B cell (primary cell): ENCODE measurements at regions of chr15 and their contacts with region 1.

Region 1: DNA sequence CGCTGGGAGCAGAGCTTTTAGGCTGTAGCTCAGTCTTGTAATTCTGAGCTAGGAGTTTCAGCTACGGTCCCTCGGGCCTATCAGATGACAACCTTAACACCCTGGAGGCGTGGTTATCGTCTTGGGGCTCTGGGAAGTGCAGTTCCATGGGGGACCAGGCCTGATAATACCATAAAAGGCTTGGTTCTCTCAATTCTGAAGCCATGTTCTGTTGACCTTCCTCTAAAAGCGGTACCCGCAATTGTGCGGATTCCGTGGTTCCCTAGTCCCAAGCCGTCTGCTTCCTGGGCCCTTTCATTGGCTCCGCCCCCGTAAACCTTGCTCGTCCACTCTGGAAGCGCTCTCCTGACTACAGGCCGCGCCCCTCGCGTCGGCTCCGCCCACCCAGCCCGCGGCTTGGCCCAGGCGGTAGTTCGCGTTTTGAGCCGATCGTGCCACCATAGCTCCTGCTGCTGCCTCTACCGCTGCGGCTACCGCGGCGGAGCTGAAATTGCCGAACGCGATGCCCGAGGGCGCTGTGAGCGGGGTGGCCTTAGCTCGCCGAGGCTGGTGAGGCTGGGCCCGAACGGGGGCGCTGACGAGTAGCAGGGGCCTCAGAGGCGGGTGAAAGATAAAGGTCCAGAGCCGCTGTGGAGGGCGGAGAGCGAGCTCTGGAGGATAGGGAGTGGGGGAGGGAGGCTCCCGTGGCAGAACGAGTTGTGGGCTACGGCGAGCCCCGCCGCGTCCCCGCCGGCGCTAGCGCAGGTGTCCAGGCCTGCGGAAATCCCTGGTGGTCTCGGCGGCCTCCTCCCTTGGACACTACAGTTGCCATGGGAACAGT is at the start of gene MAPKBP1:
- DNase-seq: peak; percentile 99
- ATAC-seq: peak; percentile 91
- H3K4me3 ChIP-seq: peak within 1 kb of the TSS; percentile 75 to 87 (median 78)
- H3K4me3 Mint-ChIP-seq: peak within 1 kb of the TSS; percentile 99
- H3K27ac ChIP-seq: peak within 1 kb of the TSS; percentile 62 to 71
- H3K27ac Mint-ChIP-seq: peak within 1 kb of the TSS; percentile 96
- H3K4me1 ChIP-seq: peaks cover 30 to 32% of the 10 kb centered on the region in 2 donors
- H3K4me1 Mint-ChIP-seq: peaks cover 57% of the 10 kb centered on the region
- H3K27me3 ChIP-seq: no peaks in the 10 kb centered on the region
- H3K27me3 Mint-ChIP-seq: no peaks in the 10 kb centered on the region
- CTCF ChIP-seq: peak; percentile 83
- total RNA-seq, gene MAPKBP1: 59.2 and 65.5 TPM in 2 replicates

Region 2: DNA sequence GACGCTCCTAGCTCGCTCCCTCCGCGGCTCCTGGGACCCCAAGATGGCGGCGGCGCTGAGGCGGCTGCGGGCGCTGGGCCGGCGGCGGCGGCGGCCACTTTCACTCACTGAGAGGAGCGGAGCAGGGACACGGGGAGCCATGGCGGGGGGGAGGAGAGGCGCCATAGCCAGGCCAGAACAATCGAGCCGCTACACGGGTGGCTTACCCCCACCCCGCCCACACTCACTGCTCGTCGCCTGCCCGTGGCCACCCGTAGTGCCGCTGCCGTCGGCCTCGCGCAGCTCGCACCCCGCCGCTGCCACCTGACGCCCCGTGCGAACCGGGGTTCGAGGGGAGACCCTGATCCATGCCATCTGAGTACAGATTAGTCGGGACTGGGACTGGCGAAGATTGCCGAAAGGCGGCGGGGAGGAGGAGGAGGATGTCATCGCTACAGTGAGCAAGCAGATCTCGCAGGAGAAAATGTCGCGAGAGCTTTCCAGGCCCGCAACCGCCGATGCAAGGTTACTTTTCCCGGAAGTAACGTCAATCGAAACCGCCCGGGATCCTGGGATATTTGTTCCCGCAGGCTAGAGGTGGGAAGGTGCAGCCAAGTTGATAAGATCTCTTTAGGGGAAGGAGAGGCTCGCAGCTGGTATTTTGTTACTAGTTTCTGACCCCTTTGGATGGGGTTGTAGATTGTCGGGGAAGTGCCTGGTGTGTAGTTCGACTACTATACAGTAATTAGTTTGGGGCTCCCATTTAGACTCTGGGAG is 658.0 kb before region 1 on chr15 and contains the start of gene INO80:
- CTCF ChIA-PET with region 1: no interaction called
- POLR2A ChIA-PET with region 1: no interaction called
- intact Hi-C with region 1: loop called (anchors 5 kb)
- DNase-seq: peak; percentile 98
- ATAC-seq: peak; percentile 66
- H3K4me3 ChIP-seq: peak within 1 kb of the TSS; percentile 73 to 92 (median 80)
- H3K4me3 Mint-ChIP-seq: peak within 1 kb of the TSS; percentile 100
- H3K27ac ChIP-seq: peak within 1 kb of the TSS; percentile 93
- H3K27ac Mint-ChIP-seq: peak within 1 kb of the TSS; percentile 100
- H3K4me1 ChIP-seq: peaks cover 16 to 17% of the 10 kb centered on the region in 2 donors
- H3K4me1 Mint-ChIP-seq: peaks cover 26% of the 10 kb centered on the region
- H3K27me3 ChIP-seq: no peaks in the 10 kb centered on the region
- H3K27me3 Mint-ChIP-seq: no peaks in the 10 kb centered on the region
- CTCF ChIP-seq: no peak
- total RNA-seq, gene INO80: 55.7 and 57.8 TPM in 2 replicates

Region 3: DNA sequence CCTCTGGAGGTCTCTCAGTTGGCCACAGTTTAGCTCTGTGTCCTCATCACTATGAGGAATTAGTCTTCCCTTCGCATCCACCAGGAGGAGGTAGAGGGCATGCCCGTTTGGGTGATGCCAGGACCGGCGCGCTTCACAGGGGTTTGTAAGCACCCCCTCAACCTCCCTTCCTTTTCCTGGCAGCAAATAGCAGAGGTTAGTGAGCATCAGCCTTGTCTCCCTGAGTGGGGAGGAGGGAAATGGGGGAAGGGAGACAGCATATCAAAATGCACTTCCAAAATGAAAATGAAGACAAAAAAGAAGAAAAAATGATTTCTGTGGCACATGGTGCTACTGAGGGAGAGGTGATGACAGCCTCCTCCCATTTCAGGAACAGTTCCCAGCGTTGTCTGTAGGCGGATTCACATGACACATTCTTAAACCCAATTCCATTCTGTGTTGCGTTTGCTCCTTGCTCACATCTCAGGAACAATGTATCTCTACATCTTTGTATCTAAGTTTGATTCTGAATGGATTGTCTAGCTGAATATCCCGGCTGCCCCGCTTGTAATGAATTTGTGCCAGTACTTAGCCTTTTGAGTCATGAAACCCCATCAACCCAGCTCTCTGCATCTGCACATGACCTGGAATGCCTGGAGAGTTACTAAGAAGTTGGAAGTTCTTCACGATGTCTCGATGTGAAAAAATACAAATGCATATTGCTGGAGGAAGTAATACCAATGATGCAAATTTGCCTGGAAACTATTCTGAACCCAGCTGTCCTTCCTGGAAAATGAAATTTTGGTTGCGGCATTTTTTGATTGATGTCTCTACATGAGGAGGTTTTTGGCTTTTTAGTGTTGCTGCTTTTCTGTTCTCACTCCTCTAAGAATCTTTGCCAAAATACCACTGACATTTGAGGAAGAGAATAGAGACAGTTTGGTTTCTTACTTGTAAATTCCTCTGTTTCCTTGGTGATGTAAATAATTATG is 170.0 kb before region 1 on chr15:
- CTCF ChIA-PET with region 1: interaction called, 19 read pairs
- POLR2A ChIA-PET with region 1: interaction called, 6 read pairs
- intact Hi-C with region 1: no loop called
- DNase-seq: peak; percentile 74
- ATAC-seq: peak; percentile 85
- H3K4me3 ChIP-seq: peak overlapping the region in 3 of 5 experiments; percentile 2 to 31 (median 29)
- H3K4me3 Mint-ChIP-seq: peak overlapping the region; percentile 77
- H3K27ac ChIP-seq: no peak overlapping the region
- H3K27ac Mint-ChIP-seq: no peak overlapping the region
- H3K4me1 ChIP-seq: peaks cover 8 to 10% of the 10 kb centered on the region in 2 donors
- H3K4me1 Mint-ChIP-seq: peaks cover 9% of the 10 kb centered on the region
- H3K27me3 ChIP-seq: peaks cover 0 to 17% (median 5%) of the 10 kb centered on the region in 4 experiments
- H3K27me3 Mint-ChIP-seq: peaks cover 34% of the 10 kb centered on the region
- CTCF ChIP-seq: peak; percentile 80

Region 4: GRCh38 chr15:41713047-41713446 is 61.2 kb before region 1 on chr15:
- CTCF ChIA-PET with region 1: no interaction called
- POLR2A ChIA-PET with region 1: no interaction called
- intact Hi-C with region 1: no loop called
- DNase-seq: no peak
- ATAC-seq: no peak
- H3K4me3 ChIP-seq: no peak overlapping the region
- H3K4me3 Mint-ChIP-seq: no peak overlapping the region
- H3K27ac ChIP-seq: no peak overlapping the region
- H3K27ac Mint-ChIP-seq: no peak overlapping the region
- H3K4me1 ChIP-seq: no peaks in the 10 kb centered on the region
- H3K4me1 Mint-ChIP-seq: no peaks in the 10 kb centered on the region
- H3K27me3 ChIP-seq: no peaks in the 10 kb centered on the region
- H3K27me3 Mint-ChIP-seq: no peaks in the 10 kb centered on the region
- CTCF ChIP-seq: no peak

Region 5: DNA sequence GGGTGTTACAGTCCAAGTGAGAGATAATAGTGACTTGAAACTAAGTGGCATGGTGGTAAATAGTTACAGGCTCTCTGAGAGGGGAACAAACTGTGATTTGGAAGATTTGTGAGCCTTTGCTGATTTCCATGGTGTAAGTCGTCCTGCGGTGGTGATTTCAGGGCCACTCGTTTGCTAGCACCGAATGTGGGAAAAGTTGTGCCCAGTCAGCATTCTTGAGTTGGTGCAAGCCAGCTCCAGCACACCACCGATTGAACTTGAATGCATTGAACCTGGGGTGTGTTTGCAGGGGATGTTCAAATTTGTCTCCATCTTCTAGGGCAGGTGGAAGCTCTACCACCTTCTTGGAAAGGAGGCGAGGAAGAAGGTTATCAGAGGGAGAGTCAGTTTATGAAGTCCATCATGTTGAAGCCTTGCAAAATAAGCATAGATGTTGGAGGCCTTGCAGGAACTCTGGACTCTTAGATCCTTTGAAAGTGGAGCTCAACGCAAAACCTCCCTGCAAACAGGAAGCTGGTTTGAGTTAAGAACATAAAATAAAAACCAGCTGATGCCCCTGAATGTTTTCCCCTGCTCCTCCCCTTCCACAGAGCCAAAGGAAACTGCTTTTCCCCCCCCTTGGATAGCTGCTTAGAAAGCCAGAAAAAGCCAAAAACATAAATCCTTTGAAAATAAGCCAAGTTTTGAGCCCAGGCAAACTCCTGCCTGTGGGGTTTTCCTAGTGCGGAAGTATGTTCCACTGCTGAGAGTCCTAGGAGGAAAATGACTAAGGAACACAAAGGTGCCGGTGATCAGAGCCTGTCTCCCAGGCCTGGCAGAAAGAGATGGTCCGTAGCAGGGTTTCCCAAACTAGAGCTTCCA is 22.0 kb after region 1 on chr15:
- CTCF ChIA-PET with region 1: interaction called, 716 read pairs
- POLR2A ChIA-PET with region 1: no interaction called
- intact Hi-C with region 1: no loop called
- DNase-seq: no peak
- ATAC-seq: no peak
- H3K4me3 ChIP-seq: no peak overlapping the region
- H3K4me3 Mint-ChIP-seq: no peak overlapping the region
- H3K27ac ChIP-seq: no peak overlapping the region
- H3K27ac Mint-ChIP-seq: peak overlapping the region; percentile 16
- H3K4me1 ChIP-seq: peaks cover 6 to 18% of the 10 kb centered on the region in 2 donors
- H3K4me1 Mint-ChIP-seq: peaks cover 30% of the 10 kb centered on the region
- H3K27me3 ChIP-seq: no peaks in the 10 kb centered on the region
- H3K27me3 Mint-ChIP-seq: no peaks in the 10 kb centered on the region
- CTCF ChIP-seq: no peak

Region 6: GRCh38 chr15:41876689-41877088 is 102.4 kb after region 1 on chr15:
- CTCF ChIA-PET with region 1: interaction called, 10 read pairs
- POLR2A ChIA-PET with region 1: no interaction called
- intact Hi-C with region 1: no loop called
- DNase-seq: no peak
- ATAC-seq: no peak
- H3K4me3 ChIP-seq: no peak overlapping the region
- H3K4me3 Mint-ChIP-seq: no peak overlapping the region
- H3K27ac ChIP-seq: no peak overlapping the region
- H3K27ac Mint-ChIP-seq: no peak overlapping the region
- H3K4me1 ChIP-seq: peaks cover 3 to 11% of the 10 kb centered on the region in 2 donors
- H3K4me1 Mint-ChIP-seq: peaks cover 12% of the 10 kb centered on the region
- H3K27me3 ChIP-seq: peaks cover 0 to 26% (median 1%) of the 10 kb centered on the region in 4 experiments
- H3K27me3 Mint-ChIP-seq: peaks cover 26% of the 10 kb centered on the region
- CTCF ChIP-seq: no peak

Region 7: DNA sequence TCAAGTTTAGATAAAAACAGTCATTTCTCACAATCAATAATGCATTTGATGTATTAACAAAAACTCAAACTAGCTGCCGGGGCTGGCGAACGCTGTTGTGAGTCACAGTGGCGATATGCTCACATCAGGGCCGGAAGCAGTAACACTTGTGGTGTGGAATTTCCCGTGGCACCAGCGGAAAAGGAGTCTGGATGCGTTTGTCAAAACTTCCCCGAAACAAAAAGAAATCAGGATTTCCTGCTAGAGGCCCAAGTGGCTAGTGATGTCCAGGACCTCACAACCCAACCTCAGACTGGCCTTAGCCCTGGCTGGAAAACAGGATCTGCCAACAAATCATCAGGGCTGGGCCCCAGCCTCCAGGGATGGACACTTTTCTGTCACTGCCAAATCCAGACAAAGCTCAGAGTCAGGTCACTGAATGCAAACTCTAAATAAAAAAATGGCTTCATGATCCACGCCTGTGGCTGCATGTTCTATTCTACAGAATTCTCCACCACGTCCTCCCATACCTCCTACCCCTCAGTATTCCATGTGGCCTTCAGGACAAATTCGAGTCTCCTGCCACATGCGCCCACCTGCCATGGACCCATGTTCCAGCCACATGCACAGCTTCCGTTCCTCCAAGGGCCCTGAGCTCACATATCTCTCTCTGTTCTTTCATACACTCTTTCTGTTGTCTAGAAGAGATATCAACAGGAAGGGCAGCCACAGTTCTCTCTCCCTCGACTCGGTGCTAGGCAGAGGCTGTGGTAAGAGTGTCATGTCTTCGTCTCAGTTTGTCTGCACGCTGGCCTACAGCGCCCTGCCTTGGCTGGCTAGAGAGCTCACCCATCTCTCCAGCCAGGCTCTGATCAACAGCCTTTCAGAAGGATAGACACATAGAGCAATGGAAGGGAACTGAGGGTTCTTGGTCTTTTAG is 162.6 kb after region 1 on chr15:
- CTCF ChIA-PET with region 1: interaction called, 19 read pairs
- POLR2A ChIA-PET with region 1: no interaction called
- intact Hi-C with region 1: no loop called
- DNase-seq: peak; percentile 41
- ATAC-seq: peak; percentile 70
- H3K4me3 ChIP-seq: no peak overlapping the region
- H3K4me3 Mint-ChIP-seq: no peak overlapping the region
- H3K27ac ChIP-seq: peak overlapping the region; percentile 20 to 78
- H3K27ac Mint-ChIP-seq: peak overlapping the region; percentile 82
- H3K4me1 ChIP-seq: peaks cover 17 to 35% of the 10 kb centered on the region in 2 donors
- H3K4me1 Mint-ChIP-seq: peaks cover 34% of the 10 kb centered on the region
- H3K27me3 ChIP-seq: no peaks in the 10 kb centered on the region
- H3K27me3 Mint-ChIP-seq: no peaks in the 10 kb centered on the region
- CTCF ChIP-seq: no peak